ENCODE measurements at regions of chr15 and their contacts with region 1.

Region 1: GRCh38 chr15:98442379-98442833 is 205.9 kb upstream of the IGF1R start:
- DNase-seq: peak; percentile 82
- ATAC-seq: peak; percentile 98
- H3K4me3 ChIP-seq: no peak overlapping the region
- H3K27ac ChIP-seq: no peak overlapping the region
- H3K4me1 ChIP-seq: no peaks in the 10 kb centered on the region
- H3K27me3 ChIP-seq: peaks cover 17% of the 10 kb centered on the region
- CTCF ChIP-seq: peak; percentile 79
- POLR2A ChIP-seq: no peak
- RAD21 ChIP-seq: peak; percentile 84

Region 2: GRCh38 chr15:98387866-98388265 is 54.5 kb before region 1 on chr15:
- CTCF ChIA-PET with region 1: no interaction called
- POLR2A ChIA-PET with region 1: no interaction called
- dilution Hi-C with region 1: no loop called
- in situ Hi-C with region 1: no loop called
- intact Hi-C with region 1: no loop called
- DNase-seq: no peak
- ATAC-seq: no peak
- H3K4me3 ChIP-seq: no peak overlapping the region
- H3K27ac ChIP-seq: no peak overlapping the region
- H3K4me1 ChIP-seq: no peaks in the 10 kb centered on the region
- H3K27me3 ChIP-seq: no peaks in the 10 kb centered on the region
- CTCF ChIP-seq: no peak
- POLR2A ChIP-seq: no peak
- RAD21 ChIP-seq: no peak

Region 3: DNA sequence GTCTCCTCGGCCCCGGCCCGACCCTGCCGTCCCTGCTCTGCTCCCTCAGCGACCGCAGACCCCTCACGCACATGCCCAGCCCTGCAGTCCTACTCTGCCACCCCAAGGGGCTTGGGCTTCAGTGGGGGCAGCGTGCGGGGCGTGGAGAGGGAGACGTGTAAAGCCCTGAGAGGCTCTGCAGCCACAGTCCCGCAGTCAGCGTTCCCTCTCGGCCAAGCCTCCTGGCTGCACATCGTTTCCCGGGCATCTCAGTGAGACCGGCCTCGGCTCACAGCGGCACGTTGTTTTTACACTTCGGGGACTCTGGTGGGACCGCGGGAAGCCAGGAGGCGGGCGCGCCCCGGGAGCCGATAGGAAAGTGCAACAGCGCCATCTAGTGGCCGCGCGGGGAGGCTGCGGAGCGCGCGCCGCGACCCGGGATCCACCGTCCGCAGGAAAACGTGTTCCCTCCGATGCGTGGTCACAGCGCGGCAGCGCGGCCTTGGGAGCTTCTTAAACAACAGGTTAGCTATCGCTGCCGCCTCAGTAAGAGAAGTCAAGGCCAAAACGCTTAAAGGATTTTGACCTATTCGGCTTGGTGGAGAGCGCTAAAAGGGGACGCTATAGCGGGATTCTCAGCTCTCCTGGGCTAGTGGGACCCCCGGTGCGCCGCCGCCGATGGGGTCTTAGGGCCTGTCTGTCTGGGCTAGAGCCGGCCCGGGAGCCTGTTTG is 20.8 kb before region 1 on chr15:
- CTCF ChIA-PET with region 1: no interaction called
- POLR2A ChIA-PET with region 1: no interaction called
- dilution Hi-C with region 1: no loop called
- in situ Hi-C with region 1: no loop called
- intact Hi-C with region 1: no loop called
- DNase-seq: peak; percentile 13
- ATAC-seq: peak; percentile 92
- H3K4me3 ChIP-seq: no peak overlapping the region; the same call in 1 of the 2 replicates
- H3K27ac ChIP-seq: no peak overlapping the region
- H3K4me1 ChIP-seq: no peaks in the 10 kb centered on the region; the same call in 1 of the 2 replicates
- H3K27me3 ChIP-seq: peaks cover 36% of the 10 kb centered on the region
- CTCF ChIP-seq: peak; percentile 95
- POLR2A ChIP-seq: peak; percentile 38; the same call in 1 of the 2 replicates
- RAD21 ChIP-seq: peak; percentile 82

Region 4: GRCh38 chr15:98493917-98494511 is 51.6 kb after region 1 on chr15:
- CTCF ChIA-PET with region 1: no interaction called
- POLR2A ChIA-PET with region 1: no interaction called
- dilution Hi-C with region 1: no loop called
- in situ Hi-C with region 1: no loop called
- intact Hi-C with region 1: no loop called
- DNase-seq: no peak
- ATAC-seq: no peak
- H3K4me3 ChIP-seq: no peak overlapping the region
- H3K27ac ChIP-seq: no peak overlapping the region
- H3K4me1 ChIP-seq: no peaks in the 10 kb centered on the region
- H3K27me3 ChIP-seq: peaks cover 5% of the 10 kb centered on the region; the same call in 1 of the 2 replicates
- CTCF ChIP-seq: no peak
- POLR2A ChIP-seq: no peak
- RAD21 ChIP-seq: no peak

Region 5: DNA sequence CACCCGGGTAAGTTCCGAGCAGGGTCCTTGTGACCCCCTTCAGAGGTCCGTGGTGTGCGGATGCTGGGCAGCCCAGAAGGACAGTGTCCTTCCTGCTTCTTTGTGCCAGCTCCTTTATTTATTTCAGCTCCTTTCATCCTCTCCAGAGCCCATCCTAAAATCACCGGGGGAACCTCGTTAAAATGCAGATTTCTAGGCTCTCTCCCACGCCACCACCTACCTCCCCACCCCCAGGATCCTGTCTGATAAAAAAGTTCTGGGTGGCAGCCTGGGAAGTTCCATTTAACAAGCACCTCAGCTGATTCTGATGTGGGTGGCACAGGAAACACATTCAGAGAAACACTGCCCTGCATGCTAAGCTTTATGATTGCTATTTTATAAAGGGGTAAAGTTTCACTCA is 193.4 kb after region 1 on chr15:
- CTCF ChIA-PET with region 1: no interaction called
- POLR2A ChIA-PET with region 1: no interaction called
- dilution Hi-C with region 1: no loop called
- in situ Hi-C with region 1: no loop called
- intact Hi-C with region 1: no loop called
- DNase-seq: no peak
- ATAC-seq: no peak
- H3K4me3 ChIP-seq: no peak overlapping the region
- H3K27ac ChIP-seq: no peak overlapping the region
- H3K4me1 ChIP-seq: no peaks in the 10 kb centered on the region
- H3K27me3 ChIP-seq: peaks cover 44% of the 10 kb centered on the region
- CTCF ChIP-seq: no peak
- POLR2A ChIP-seq: no peak
- RAD21 ChIP-seq: no peak

Region 6: GRCh38 chr15:98779463-98780071 is 337.2 kb after region 1 on chr15:
- CTCF ChIA-PET with region 1: no interaction called
- POLR2A ChIA-PET with region 1: no interaction called
- dilution Hi-C with region 1: no loop called
- in situ Hi-C with region 1: no loop called
- intact Hi-C with region 1: loop called (anchors 10 kb)
- DNase-seq: peak; percentile 65
- ATAC-seq: peak; percentile 91
- H3K4me3 ChIP-seq: no peak overlapping the region
- H3K27ac ChIP-seq: no peak overlapping the region
- H3K4me1 ChIP-seq: peaks cover 14% of the 10 kb centered on the region
- H3K27me3 ChIP-seq: no peaks in the 10 kb centered on the region
- CTCF ChIP-seq: peak; percentile 84
- POLR2A ChIP-seq: no peak
- RAD21 ChIP-seq: peak; percentile 87

Region 7: DNA sequence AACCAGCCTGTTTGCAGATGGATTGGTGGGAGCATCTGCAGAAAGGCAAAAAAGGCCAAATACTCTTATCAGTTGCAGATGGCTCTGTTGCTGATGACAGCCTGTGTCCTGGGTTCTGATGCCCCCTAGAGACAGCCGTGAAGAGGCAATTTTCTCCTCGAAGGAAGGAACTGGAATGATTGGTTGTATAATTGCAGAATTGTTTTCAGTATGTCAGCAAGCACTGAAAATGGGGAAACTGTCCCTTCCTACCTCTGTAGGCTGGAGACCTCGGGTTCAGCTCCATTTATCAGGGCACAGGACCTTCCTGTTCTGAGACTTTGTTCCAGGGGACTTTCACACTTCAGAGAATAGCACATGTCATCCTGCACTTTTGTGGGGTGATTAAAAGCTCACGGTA is 462.1 kb after region 1 on chr15:
- CTCF ChIA-PET with region 1: no interaction called
- POLR2A ChIA-PET with region 1: no interaction called
- dilution Hi-C with region 1: no loop called
- in situ Hi-C with region 1: no loop called
- intact Hi-C with region 1: loop called (anchors 5 kb)
- DNase-seq: peak; percentile 75
- ATAC-seq: peak; percentile 66
- H3K4me3 ChIP-seq: no peak overlapping the region
- H3K27ac ChIP-seq: peak overlapping the region; percentile 60; the same call in 1 of the 2 replicates
- H3K4me1 ChIP-seq: peaks cover 51% of the 10 kb centered on the region
- H3K27me3 ChIP-seq: no peaks in the 10 kb centered on the region
- CTCF ChIP-seq: peak; percentile 82
- POLR2A ChIP-seq: 0 out of 2 replicates have a peak, but pooled peaks have one; percentile 30
- RAD21 ChIP-seq: peak; percentile 85

Region 8: GRCh38 chr15:99076552-99077308 is 634.3 kb after region 1 on chr15:
- CTCF ChIA-PET with region 1: interaction called, 4 read pairs
- POLR2A ChIA-PET with region 1: no interaction called
- dilution Hi-C with region 1: no loop called
- in situ Hi-C with region 1: loop called (anchors 10 kb)
- intact Hi-C with region 1: loop called (anchors 1 kb)
- DNase-seq: peak; percentile 86
- ATAC-seq: peak; percentile 94
- H3K4me3 ChIP-seq: peak overlapping the region; percentile 19; the same call in 1 of the 2 replicates
- H3K27ac ChIP-seq: peak overlapping the region; percentile 14
- H3K4me1 ChIP-seq: no peaks in the 10 kb centered on the region
- H3K27me3 ChIP-seq: no peaks in the 10 kb centered on the region
- CTCF ChIP-seq: peak; percentile 91
- POLR2A ChIP-seq: no peak
- RAD21 ChIP-seq: peak; percentile 96

Measured in IMR-90 (cell line).